ENCODE measurements at regions of chr18 and their contacts with region 1.

Region 1: GRCh38 chr18:44767807-44768206 is 87.1 kb downstream of the SETBP1 start:
- DNase-seq: no peak
- H3K4me3 ChIP-seq: no peak overlapping the region
- H3K27me3 ChIP-seq: no peaks in the 10 kb centered on the region
- CTCF ChIP-seq: no peak

Region 2: DNA sequence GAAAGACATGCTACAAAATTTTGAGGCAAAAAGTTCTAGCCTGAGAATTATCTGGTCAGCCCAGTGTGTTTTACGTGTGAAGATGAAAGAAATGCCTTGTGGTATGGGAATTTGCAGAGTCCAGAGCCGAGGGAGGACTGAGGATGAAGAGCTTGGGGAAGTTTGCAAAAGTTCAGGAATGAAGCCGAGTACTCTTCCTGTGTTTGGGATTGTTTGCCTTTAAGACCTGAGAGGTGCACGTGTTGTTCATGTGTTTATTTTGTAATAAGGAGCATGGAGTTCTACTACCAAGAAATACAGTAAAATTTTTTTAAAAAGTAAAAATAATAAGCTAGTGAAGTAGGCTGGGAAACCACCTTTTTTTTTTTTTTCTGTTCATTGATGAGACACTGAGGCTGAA is 72.3 kb before region 1 on chr18:
- CTCF ChIA-PET with region 1: no interaction called
- POLR2A ChIA-PET with region 1: interaction called, 10 read pairs
- DNase-seq: no peak
- H3K4me3 ChIP-seq: no peak overlapping the region
- H3K27me3 ChIP-seq: no peaks in the 10 kb centered on the region
- CTCF ChIP-seq: no peak

Region 3: DNA sequence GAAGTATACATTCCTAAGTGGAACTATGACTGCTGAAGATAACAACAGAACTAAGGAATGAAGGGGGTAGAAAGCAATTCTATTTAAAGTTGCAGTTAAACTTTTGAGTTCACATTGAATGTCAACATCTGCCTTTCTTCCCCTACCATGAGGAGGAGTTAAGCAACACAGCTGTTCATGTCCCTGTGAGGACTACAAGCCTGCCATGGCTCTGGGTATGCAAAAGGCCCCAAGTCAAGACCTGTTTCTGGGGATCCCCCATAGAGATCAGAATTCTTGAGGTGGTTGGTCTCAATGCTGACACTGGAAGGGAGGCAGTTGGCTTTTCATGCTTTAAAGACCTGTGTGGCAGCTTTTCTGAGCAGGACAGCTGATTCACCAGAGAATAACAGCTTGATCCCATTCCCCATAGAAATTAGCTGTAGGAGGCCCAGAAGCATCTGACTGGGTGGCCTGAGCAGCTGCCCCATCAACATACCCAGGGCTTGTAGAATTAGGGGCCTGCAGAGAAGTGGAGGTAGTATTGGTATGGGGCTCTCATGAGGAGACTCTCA is 43.8 kb after region 1 on chr18:
- CTCF ChIA-PET with region 1: no interaction called
- POLR2A ChIA-PET with region 1: no interaction called
- DNase-seq: no peak
- H3K4me3 ChIP-seq: no peak overlapping the region
- H3K27me3 ChIP-seq: no peaks in the 10 kb centered on the region
- CTCF ChIP-seq: no peak

Measured in BJ (cell line).